SK-N-SH (cell line): ENCODE measurements at regions of chr5 and their contacts with region 1.

Region 1: DNA sequence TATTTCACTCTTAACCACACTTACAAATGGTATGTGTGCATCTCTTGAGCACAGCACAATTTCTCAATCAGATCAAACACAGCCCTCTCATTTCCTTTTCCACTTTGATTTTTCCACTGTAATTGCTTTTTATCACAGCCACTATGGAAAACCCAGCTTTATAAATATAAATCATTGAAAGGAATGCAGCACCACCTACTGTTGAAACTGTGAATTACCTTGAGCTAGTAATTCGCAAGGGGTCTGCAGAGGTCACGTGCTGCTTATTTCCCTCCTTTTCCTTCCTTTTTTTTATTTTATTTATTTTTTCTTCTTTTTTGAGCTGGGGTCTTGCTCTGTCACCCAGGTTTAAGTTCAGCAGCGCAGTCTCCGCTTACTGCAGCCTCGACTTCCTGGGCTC is 76.9 kb downstream of the CDH6 start:
- DNase-seq: peak; percentile 30
- H3K4me3 ChIP-seq: no peak overlapping the region; a peak in 1 of 4 replicates
- H3K27ac ChIP-seq: no peak overlapping the region
- H3K4me1 ChIP-seq: peaks cover 0 to 5% of the 10 kb centered on the region in 2 experiments; a peak in 1 of 4 replicates
- H3K27me3 ChIP-seq: no peaks in the 10 kb centered on the region
- CTCF ChIP-seq: peak; percentile 66
- EP300 ChIP-seq: no peak
- RAD21 ChIP-seq: peak; percentile 68

Region 2: DNA sequence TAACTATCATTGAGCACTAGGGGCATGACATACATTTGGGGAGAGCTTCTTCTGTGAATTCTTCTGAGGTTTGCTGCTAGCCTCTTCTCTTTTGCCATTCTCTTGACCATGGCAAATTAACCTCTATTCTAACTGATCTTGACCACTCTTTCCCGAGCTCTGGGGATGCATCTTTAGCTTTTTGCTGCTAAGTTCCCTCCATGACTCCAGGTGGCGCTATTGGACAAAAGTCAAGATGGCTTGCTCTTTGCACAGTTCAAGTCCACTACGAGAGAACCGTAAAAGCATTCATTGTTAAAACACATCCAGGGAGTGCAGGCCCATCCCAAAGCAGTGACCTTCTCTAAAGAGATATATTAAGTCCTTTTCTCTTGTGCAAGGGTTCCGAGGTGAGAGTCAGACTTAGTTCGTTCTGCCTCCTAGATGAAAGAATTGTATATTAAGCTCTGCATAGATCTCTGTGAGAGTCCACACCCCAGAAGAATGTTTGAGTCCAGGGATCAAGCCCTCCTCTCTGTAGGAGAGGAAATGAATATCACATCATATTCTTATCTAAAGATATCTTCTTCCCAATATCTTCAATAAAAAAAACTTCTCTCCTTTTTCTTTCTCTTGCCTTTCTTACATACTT is 1229.8 kb before region 1 on chr5:
- CTCF ChIA-PET with region 1: interaction called, 17 read pairs
- POLR2A ChIA-PET with region 1: no interaction called
- DNase-seq: peak; percentile 50
- H3K4me3 ChIP-seq: no peak overlapping the region; a peak in 1 of 4 replicates
- H3K27ac ChIP-seq: no peak overlapping the region
- H3K4me1 ChIP-seq: peaks cover 0 to 4% of the 10 kb centered on the region in 2 experiments; a peak in 1 of 4 replicates
- H3K27me3 ChIP-seq: no peaks in the 10 kb centered on the region
- CTCF ChIP-seq: peak; percentile 81
- EP300 ChIP-seq: no peak
- RAD21 ChIP-seq: peak; percentile 82

Region 3: DNA sequence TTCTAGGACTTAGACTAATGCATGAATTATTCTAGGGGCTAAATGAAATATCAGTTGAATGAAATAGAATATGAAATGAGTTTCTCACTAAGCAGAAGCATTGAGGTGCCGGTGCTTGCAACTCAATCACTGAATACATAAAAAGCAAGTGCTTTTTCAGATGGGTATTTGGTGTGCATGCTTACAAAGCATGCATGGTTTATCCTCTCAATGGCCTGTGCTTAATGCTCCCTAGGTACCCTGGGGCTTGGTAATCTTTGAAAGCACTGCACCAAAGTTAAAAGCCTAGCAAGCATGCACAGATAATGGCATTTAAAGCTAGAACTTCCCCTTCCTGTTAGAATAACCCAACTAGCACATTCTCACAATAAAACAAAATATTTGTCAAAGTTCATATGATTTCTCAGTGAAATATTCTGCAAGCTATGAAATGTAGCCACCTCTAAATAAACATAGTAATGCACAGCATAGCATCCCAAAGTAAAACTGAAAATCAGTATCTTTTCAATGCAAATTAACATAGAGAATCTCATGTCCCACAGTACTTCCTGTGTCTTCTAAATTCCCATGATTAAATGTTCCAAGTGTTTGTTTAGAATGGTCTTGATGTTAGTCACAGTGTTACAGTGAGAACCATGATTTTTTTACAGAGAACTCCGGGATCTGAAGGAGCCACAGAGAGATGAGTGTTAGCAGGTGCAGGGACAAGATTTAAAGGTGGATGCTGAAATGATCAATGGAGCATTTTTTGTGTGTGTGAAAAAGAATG is 220.3 kb before region 1 on chr5:
- CTCF ChIA-PET with region 1: no interaction called
- POLR2A ChIA-PET with region 1: no interaction called
- DNase-seq: no peak
- H3K4me3 ChIP-seq: no peak overlapping the region
- H3K27ac ChIP-seq: no peak overlapping the region
- H3K4me1 ChIP-seq: no peaks in the 10 kb centered on the region; a peak in 1 of 4 replicates
- H3K27me3 ChIP-seq: no peaks in the 10 kb centered on the region
- CTCF ChIP-seq: no peak
- EP300 ChIP-seq: no peak
- RAD21 ChIP-seq: no peak

Region 4: GRCh38 chr5:31251032-31251431 is 19.4 kb before region 1 on chr5:
- CTCF ChIA-PET with region 1: interaction called, 13 read pairs
- POLR2A ChIA-PET with region 1: no interaction called
- DNase-seq: no peak
- H3K4me3 ChIP-seq: no peak overlapping the region
- H3K27ac ChIP-seq: no peak overlapping the region
- H3K4me1 ChIP-seq: peaks cover 0 to 7% of the 10 kb centered on the region in 2 experiments; a peak in 3 of 4 replicates
- H3K27me3 ChIP-seq: no peaks in the 10 kb centered on the region
- CTCF ChIP-seq: no peak
- EP300 ChIP-seq: no peak
- RAD21 ChIP-seq: no peak

Region 5: GRCh38 chr5:31289429-31289828 is 19.0 kb after region 1 on chr5:
- CTCF ChIA-PET with region 1: interaction called, 10 read pairs
- POLR2A ChIA-PET with region 1: no interaction called
- DNase-seq: no peak
- H3K4me3 ChIP-seq: no peak overlapping the region
- H3K27ac ChIP-seq: no peak overlapping the region
- H3K4me1 ChIP-seq: peaks cover 0 to 8% of the 10 kb centered on the region in 2 experiments; a peak in 1 of 4 replicates
- H3K27me3 ChIP-seq: no peaks in the 10 kb centered on the region
- CTCF ChIP-seq: no peak
- EP300 ChIP-seq: no peak
- RAD21 ChIP-seq: no peak

Region 6: DNA sequence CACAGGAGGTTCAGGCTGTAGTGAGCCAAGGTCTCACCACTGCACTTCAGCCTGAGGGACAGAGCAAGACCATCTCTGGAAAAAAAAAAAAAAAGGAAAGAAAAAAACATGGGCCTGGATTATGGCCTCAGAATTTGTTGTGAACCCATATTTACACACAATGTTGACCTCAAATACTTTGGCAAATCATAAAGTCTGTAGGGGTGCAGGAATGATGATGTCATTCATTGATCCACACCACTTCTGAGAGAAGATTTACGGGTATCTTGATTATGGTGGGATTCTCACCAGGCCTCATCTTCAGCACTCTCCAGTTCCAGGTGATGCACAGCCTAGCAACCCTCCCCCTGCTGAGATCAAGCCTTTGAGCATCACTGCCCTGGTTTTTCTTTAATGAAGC is 80.0 kb after region 1 on chr5:
- CTCF ChIA-PET with region 1: no interaction called
- POLR2A ChIA-PET with region 1: no interaction called
- DNase-seq: no peak
- H3K4me3 ChIP-seq: no peak overlapping the region
- H3K27ac ChIP-seq: no peak overlapping the region
- H3K4me1 ChIP-seq: no peaks in the 10 kb centered on the region; a peak in 3 of 4 replicates
- H3K27me3 ChIP-seq: no peaks in the 10 kb centered on the region
- CTCF ChIP-seq: no peak
- EP300 ChIP-seq: no peak
- RAD21 ChIP-seq: no peak